Activated T-helper 1 cell treated with anti-CD3 and anti-CD28 coated beads, Interleukin-12 subunit alpha, Interleukin-12 subunit beta, Interleukin-2, Interleukin-4 antibody, amounts not matched to agents 30 ng/mL and 10 ng/mL and 1 ng/mL, durations not matched to agents 14 hours and 24 hours and 36 hours (primary cell): ENCODE measurements at regions of chr7 and their contacts with region 1.

Region 1: DNA sequence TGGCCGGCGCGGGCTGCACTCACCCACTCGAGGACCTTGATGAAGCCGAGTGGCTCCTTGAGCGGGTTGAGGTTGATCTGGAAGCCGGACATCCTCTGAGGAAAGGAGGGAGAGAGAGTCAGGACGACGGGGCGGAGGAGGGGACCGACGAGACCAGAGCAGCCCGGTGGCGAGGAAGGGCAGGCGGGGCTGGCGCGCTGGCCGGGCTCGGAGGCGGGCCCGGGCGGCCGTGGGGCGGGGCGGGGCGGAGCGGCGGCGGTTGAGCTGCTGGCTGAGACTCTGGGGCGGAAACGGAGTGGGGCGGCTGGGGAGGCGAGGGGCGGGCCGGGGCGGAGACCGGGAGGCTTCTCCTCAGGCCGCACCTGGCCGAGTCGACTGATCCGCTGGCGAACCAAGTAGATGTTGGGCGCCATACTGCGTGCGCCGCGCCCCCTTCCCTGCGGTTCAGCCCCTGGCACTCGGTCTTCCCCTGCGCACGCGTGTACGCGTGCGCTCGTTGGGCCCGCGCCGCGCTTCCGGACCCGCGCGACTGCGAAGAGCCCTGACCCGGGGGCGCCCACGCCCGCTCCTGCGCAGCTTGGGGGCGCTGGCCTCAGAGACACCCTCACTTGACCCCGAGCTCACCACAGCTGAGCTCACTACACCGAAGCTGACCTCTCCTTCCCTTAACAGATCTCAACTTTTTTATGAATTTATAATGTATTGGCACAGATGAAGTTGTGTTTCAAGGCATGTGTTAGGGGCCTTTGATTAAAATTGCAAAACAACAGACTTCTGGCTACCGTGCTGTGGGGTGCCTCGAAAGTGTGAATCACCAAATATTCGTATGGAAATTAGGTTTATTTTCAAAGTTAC is at the start of gene SYPL1:
- DNase-seq: peak; percentile 86
- H3K4me3 Mint-ChIP-seq: peak within 1 kb of the TSS; percentile 86
- H3K27ac Mint-ChIP-seq: peak within 1 kb of the TSS; percentile 88
- H3K4me1 Mint-ChIP-seq: peaks cover 47% of the 10 kb centered on the region
- H3K27me3 Mint-ChIP-seq: no peaks in the 10 kb centered on the region
- total RNA-seq, gene SYPL1: 22.3 and 24.9 TPM in 2 replicates

Region 2: DNA sequence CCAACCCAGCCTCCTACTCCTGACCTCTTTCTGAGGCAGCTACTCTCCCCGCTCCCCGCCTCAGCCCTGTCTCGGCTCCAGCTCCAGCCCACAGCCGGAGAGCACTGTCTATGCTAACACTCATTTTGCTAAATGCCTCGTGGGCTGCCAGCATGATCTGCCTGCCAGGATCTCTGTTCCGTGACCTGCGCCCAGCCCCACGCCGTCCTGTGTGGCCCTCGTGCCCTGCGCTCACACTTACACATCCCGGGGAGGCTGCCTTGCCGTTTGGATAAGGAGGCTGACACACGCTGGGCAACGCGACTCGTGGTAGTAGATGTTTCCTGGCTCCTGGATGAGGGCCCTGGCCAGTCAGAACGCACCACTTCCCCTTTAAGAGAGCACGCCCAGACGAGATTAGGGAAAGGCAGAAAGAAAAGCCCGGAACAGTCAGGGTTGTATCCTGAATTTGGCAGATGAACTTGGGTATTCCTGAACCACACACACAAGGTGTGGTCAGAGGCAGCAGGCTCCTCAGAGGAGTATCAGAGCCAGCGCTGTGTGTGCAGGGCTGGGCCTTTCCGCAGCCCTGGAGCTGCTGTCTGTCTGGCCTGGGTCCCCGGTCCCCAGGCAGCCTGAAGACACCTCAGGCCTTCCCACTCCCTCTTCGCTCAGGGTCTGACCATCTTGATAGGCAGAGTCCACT is 433.4 kb before region 1 on chr7:
- intact Hi-C with region 1: loop called (anchors 5 kb)
- DNase-seq: no peak
- H3K4me3 Mint-ChIP-seq: peak overlapping the region; percentile 89
- H3K27ac Mint-ChIP-seq: peak overlapping the region; percentile 93
- H3K4me1 Mint-ChIP-seq: peaks cover 57% of the 10 kb centered on the region
- H3K27me3 Mint-ChIP-seq: peaks cover 1% of the 10 kb centered on the region

Region 3: DNA sequence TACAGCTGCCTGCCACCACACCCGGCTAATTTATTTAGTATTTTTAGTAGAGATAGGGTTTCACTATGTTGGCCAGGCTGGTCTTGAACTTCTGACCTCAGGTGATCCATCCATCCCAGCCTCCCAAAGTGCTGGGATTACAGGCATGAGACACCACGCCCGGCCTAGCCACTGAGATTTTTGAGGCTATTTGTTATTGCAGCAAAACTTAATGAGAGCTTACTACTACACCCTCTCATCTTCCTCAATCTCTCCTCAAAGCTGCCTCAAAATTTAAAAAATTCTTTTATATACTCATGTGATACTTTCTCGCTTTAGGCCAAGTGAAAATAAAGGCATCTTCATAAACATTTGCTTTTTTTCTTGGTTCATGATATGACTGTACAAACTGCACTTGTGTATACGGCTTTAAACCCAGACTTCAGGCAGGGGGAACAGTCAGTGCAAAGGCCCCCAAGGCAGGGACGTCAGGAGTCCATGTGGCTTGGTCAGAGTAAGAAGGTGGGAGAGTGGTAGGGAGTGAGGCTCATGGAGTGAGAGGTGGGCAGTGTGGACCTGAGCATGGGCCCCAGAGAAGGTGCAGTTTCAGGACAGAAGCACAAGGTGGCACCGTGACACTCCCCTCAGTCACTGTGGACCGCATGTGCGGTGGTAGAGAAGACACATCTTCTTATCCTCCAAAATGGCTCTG is 55.7 kb before region 1 on chr7:
- intact Hi-C with region 1: loop called (anchors 2 kb)
- DNase-seq: peak; percentile 51
- H3K4me3 Mint-ChIP-seq: no peak overlapping the region
- H3K27ac Mint-ChIP-seq: no peak overlapping the region
- H3K4me1 Mint-ChIP-seq: peaks cover 22% of the 10 kb centered on the region
- H3K27me3 Mint-ChIP-seq: peaks cover 15% of the 10 kb centered on the region

Region 4: GRCh38 chr7:106153891-106154449 is 41.6 kb after region 1 on chr7:
- intact Hi-C with region 1: loop called (anchors 2 kb)
- DNase-seq: peak; percentile 57
- H3K4me3 Mint-ChIP-seq: no peak overlapping the region
- H3K27ac Mint-ChIP-seq: peak overlapping the region; percentile 13
- H3K4me1 Mint-ChIP-seq: no peaks in the 10 kb centered on the region
- H3K27me3 Mint-ChIP-seq: peaks cover 41% of the 10 kb centered on the region

Region 5: DNA sequence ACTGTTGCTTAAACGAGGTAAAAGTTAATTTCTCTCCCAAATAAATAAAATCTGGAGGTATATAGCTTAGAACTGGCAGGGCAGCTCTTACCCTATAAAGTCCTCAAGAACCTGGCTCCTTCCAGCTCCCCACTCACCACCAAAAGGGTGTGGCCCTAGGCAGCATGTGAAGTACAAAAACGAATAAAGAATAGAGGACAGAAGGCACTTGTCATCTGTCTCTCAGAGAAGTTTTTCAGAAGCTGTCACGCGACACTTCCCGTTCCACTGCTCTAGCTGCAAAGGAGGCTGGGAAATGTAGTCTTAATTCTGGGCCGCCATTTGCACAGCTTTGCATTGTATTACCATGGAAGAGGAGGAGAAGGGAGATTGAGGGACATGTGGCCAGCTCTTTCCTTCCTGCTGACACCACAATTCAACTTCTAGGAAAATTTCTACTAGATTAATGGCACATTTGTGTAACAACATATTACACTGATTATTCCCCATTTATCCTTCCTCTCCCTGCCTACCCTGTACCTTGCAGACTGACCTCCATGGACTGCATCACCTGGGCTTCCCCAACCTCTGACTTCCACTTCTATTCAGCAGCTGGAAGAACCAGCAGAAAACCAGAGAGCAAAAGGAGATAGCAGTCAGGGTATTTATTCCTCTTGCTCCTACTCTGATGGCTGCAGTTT is 486.5 kb after region 1 on chr7:
- intact Hi-C with region 1: loop called (anchors 5 kb)
- DNase-seq: peak; percentile 51
- H3K4me3 Mint-ChIP-seq: no peak overlapping the region
- H3K27ac Mint-ChIP-seq: no peak overlapping the region
- H3K4me1 Mint-ChIP-seq: no peaks in the 10 kb centered on the region
- H3K27me3 Mint-ChIP-seq: peaks cover 5% of the 10 kb centered on the region